Pancreas (tissue), 10 donors: ENCODE measurements at regions of chr11 and their contacts with region 1.

Region 1: DNA sequence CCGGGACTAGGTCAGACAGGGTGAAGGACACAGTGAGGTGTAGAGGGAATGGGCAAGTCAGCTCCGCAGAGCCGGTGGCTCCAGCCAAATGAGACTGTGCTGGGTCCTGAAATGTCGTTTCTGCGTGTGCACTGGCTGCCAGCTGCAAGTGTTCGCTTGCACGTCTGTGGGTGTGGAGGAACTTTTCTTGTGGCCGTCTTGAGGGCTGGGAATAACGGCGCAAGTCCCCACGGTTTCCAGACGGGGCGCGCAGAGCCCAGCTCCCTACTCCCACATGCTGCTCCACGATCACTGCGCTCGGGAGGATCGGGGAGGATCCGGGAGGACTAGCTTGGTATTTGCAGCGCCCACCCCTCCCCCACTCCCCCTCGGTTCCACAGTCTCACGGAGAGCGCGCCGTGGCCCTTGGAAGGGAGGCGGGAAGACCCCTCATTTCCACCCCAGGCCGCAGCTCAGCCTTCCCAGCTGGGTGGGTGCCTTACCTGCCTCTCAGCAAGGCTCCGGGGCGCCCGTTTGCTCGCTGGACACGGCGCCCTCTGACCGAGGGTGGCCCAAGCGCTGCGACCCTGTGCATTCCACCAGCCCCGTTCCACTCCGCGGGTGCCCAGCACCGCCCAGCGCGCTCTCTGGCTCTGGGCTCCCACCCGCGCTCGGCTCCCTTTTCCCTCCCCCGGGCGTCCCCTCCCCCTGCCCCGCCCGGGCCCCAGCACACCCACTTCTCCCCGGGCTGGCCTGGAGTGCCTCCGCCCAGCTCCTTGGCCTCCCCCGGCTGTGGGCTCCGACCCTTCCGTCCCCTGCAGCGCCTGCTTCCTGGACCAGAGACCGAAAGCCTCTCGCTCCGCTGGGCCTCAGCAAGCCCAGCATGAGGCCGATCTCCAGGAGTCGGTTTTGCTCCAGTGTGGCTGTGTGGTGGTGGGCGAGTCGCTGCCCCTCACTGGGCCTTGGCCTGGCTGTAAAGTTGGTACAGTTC is at the start of gene KCNE3:
- DNase-seq: peak; percentile 34 to 79 (median 56)
- ATAC-seq: peak; percentile 76 to 88 (median 86)
- H3K4me3 ChIP-seq: peak within 1 kb of the TSS; percentile 59 to 82 (median 68)
- H3K27ac ChIP-seq: peak within 1 kb of the TSS; percentile 20 to 67 (median 53)
- H3K4me1 ChIP-seq: peaks cover 0 to 8% (median 2%) of the 10 kb centered on the region in 3 donors
- H3K27me3 ChIP-seq: no peaks in the 10 kb centered on the region
- CTCF ChIP-seq: no peak
- total RNA-seq, gene KCNE3: 4.2 to 10.9 (median 6.1) TPM

Region 2: GRCh38 chr11:74559110-74559933 is 92.1 kb after region 1 on chr11:
- intact Hi-C with region 1: loop called in 1 of 3 experiments (anchors 10 kb)
- DNase-seq: no peak
- ATAC-seq: peak in 1 of 4 donors; percentile 48
- H3K4me3 ChIP-seq: no peak overlapping the region
- H3K27ac ChIP-seq: no peak overlapping the region
- H3K4me1 ChIP-seq: no peaks in the 10 kb centered on the region
- H3K27me3 ChIP-seq: no peaks in the 10 kb centered on the region
- CTCF ChIP-seq: no peak